AG04450 (cell line): ENCODE measurements at regions of chr6 and their contacts with region 1.

Region 1: GRCh38 chr6:26342106-26343004 is 22.6 kb upstream of the BTN3A2 start:
- DNase-seq: no peak
- H3K4me3 ChIP-seq: peak overlapping the region; percentile 47
- H3K27ac ChIP-seq: no peak overlapping the region
- H3K27me3 ChIP-seq: no peaks in the 10 kb centered on the region
- CTCF ChIP-seq: no peak

Region 2: GRCh38 chr6:26204332-26205165 is 137.8 kb before region 1 on chr6:
- CTCF ChIA-PET with region 1: no interaction called
- POLR2A ChIA-PET with region 1: no interaction called
- DNase-seq: peak; percentile 98
- H3K4me3 ChIP-seq: peak overlapping the region; percentile 95
- H3K27ac ChIP-seq: peak overlapping the region; percentile 99
- H3K27me3 ChIP-seq: no peaks in the 10 kb centered on the region
- CTCF ChIP-seq: peak; percentile 51

Region 3: DNA sequence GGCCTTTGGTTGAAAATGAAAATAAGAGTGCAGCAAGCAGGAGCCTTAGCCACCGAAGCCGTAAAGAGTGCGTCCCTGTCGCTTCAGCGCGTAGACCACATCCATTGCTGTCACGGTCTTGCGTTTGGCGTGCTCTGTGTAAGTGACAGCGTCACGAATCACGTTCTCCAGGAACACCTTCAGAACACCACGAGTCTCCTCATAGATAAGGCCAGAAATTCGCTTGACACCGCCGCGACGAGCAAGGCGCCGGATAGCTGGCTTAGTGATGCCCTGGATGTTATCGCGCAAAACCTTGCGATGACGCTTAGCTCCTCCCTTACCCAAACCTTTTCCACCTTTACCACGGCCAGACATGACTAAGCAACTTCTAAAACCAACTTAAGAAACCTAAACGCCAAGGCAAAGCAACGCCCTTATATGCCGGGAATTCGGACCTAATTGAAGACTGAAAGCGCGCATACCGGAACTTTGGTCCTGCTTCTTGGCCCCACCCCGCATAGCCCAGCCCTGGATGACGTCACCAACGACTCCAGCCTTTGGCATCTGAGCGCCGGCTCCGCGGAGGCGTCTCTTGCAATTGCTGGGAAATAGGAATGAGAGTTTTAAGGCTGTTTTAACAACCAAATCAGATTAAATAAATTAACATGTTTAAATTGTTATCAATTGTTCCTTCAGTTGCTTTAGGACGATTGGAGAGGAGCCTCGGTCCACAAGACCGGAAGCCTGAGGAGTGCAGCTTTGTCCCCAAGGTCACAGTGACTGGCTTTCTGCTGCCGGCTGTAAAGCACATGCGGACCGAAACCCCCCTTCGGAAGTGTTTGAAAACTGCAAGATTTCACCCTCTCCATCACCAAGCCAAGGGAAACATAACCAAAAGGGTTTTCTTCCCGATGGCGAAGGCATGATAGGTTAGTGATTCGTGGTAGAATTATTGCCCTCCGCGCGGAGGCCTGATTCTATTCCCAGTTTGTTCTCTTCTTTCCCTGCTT is 56.9 kb before region 1 on chr6:
- CTCF ChIA-PET with region 1: no interaction called
- POLR2A ChIA-PET with region 1: no interaction called
- DNase-seq: peak; percentile 97
- H3K4me3 ChIP-seq: peak overlapping the region; percentile 99
- H3K27ac ChIP-seq: peak overlapping the region; percentile 98
- H3K27me3 ChIP-seq: no peaks in the 10 kb centered on the region
- CTCF ChIP-seq: no peak

Region 4: GRCh38 chr6:26329763-26330511 is 12.4 kb before region 1 on chr6:
- CTCF ChIA-PET with region 1: interaction called, 23 read pairs
- POLR2A ChIA-PET with region 1: no interaction called
- DNase-seq: no peak
- H3K4me3 ChIP-seq: peak overlapping the region; percentile 65; the same call in 1 of the 2 replicates
- H3K27ac ChIP-seq: no peak overlapping the region
- H3K27me3 ChIP-seq: no peaks in the 10 kb centered on the region
- CTCF ChIP-seq: no peak

Region 5: DNA sequence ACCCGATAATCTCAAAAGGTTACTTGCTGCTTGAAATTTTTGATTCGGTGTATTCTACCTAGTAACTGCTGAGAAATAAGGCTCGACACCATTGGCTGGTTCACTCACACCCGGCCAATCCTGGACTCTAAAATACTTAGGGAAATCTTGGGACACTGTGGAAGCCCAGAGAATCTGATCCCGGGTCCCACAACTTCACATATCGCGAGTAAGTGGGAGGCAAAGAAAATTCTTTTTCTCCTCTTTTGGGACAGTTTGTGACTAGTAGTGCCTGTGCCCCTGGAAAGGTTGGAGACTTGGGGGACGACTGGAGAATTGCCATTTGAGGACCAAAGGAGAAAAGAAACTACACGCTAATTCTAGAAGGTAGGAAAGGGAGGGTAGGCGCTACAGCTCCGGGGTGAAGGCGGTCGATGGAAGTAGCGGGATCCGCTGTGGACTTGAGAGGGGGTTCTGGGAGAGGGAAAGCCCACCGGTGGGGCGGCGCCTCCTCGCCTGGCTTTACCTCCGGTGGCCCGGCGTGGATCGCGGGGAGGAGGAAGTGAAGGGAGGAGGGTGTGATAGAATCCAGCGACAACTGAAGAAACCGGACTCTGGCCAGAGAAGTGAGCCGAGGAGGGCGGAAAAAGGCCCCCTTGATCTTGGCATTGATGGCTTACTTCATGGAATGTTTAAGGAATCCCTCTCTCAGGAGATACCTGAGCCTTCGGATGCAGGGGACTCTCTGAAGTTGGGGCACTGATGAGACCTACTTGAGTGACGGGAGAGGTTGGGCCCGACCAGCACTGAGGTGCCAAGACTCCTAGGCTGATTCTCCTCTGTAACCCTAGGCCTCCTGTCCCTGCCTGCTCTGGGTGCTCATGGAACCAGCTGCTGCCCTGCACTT is 79.1 kb after region 1 on chr6:
- CTCF ChIA-PET with region 1: interaction called, 11 read pairs
- POLR2A ChIA-PET with region 1: no interaction called
- DNase-seq: peak; percentile 78
- H3K4me3 ChIP-seq: peak overlapping the region; percentile 92
- H3K27ac ChIP-seq: peak overlapping the region; percentile 74
- H3K27me3 ChIP-seq: no peaks in the 10 kb centered on the region
- CTCF ChIP-seq: no peak

Region 6: GRCh38 chr6:26532699-26533531 is 190.6 kb after region 1 on chr6:
- CTCF ChIA-PET with region 1: interaction called, 27 read pairs
- POLR2A ChIA-PET with region 1: no interaction called
- DNase-seq: peak; percentile 80
- H3K4me3 ChIP-seq: peak overlapping the region; percentile 76
- H3K27ac ChIP-seq: peak overlapping the region; percentile 67
- H3K27me3 ChIP-seq: no peaks in the 10 kb centered on the region
- CTCF ChIP-seq: no peak

Region 7: GRCh38 chr6:26537846-26538571 is 195.7 kb after region 1 on chr6 and contains the start of gene HMGN4:
- CTCF ChIA-PET with region 1: interaction called, 27 read pairs
- POLR2A ChIA-PET with region 1: no interaction called
- DNase-seq: peak; percentile 81
- H3K4me3 ChIP-seq: peak within 1 kb of the TSS; percentile 84
- H3K27ac ChIP-seq: peak within 1 kb of the TSS; percentile 93
- H3K27me3 ChIP-seq: no peaks in the 10 kb centered on the region
- CTCF ChIP-seq: peak; percentile 5; the same call in 1 of the 2 replicates
- polyA plus RNA-seq, gene HMGN4: 59.0 and 72.3 TPM in 2 replicates

Region 8: DNA sequence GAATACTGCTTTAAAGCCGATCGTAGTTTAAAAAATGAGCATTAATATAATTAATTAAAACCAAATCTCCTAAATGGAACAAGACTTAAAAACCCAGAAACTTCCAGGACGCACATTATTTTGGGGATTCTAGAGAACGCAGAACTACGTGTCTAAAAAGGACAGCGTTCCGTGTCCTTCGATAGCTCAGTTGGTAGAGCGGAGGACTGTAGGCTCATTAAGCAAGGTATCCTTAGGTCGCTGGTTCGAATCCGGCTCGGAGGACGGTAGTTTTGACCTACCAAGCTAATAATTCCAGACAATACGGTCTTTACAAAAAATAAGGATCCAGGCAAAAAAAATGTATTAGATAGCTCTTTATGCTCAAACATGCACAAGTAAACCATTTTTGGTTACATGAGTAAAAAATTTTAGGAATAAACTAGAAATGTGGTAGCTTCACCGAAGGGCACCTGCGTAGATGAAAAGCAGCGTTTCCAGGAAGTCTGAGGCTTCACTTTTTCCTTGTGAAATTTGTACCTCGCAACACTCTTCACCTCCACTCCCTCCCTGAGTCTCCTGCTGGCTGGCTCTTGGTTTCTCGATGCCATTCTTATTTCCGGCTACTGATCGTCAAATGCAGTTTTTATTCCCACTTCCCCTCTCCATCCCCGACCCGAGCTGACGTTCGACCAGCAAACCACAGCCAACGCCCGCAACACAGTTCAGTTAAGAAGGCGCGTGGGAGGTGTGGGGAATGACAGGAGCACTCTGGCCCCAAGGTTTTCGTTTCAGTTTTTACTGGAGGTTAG is 234.8 kb after region 1 on chr6:
- CTCF ChIA-PET with region 1: interaction called, 17 read pairs
- POLR2A ChIA-PET with region 1: no interaction called
- DNase-seq: no peak
- H3K4me3 ChIP-seq: peak overlapping the region; percentile 62
- H3K27ac ChIP-seq: no peak overlapping the region
- H3K27me3 ChIP-seq: peaks cover 3% of the 10 kb centered on the region
- CTCF ChIP-seq: no peak

Region 9: GRCh38 chr6:26596579-26597388 is 254.4 kb after region 1 on chr6 and contains the start of gene ABT1:
- CTCF ChIA-PET with region 1: interaction called, 83 read pairs
- POLR2A ChIA-PET with region 1: no interaction called
- DNase-seq: peak; percentile 96
- H3K4me3 ChIP-seq: peak within 1 kb of the TSS; percentile 99
- H3K27ac ChIP-seq: peak within 1 kb of the TSS; percentile 66
- H3K27me3 ChIP-seq: no peaks in the 10 kb centered on the region
- CTCF ChIP-seq: no peak
- polyA plus RNA-seq, gene ABT1: 12.8 and 14.9 TPM in 2 replicates